ENCODE measurements at regions of chr14 and their contacts with region 1.

Region 1: GRCh38 chr14:76050797-76051392 is 65.3 kb downstream of the IFT43 start:
- DNase-seq: peak; percentile 55 to 60
- ATAC-seq: peak; percentile 75 to 87
- H3K4me3 ChIP-seq: no peak overlapping the region
- H3K27ac ChIP-seq: no peak overlapping the region
- H3K4me1 ChIP-seq: no peaks in the 10 kb centered on the region
- CTCF ChIP-seq: peak; percentile 89
- EP300 ChIP-seq: no peak
- POLR2A ChIP-seq: no peak
- RAD21 ChIP-seq: peak; percentile 85 to 93

Region 2: DNA sequence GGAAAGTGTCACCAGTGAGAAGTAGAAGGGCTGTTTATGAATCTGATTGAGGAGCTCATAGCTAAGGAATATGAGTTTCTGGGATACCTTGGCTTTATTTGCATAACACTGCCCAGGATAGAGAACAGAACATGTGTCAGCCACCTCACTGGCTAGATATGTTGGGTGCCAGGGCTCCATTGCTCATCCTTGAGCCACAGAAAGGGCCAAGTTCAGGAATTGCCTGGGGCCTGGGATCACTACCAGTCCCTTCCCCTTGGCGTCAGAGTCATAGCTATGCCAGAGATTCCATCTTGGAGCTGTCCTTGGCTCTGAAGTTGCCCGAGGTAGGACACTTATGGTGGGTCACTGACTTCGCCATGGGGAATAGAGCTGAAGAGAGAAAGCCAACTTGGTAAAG is 16.3 kb before region 1 on chr14:
- CTCF ChIA-PET with region 1: interaction called, 38 read pairs
- POLR2A ChIA-PET with region 1: no interaction called
- DNase-seq: no peak
- ATAC-seq: no peak
- H3K4me3 ChIP-seq: no peak overlapping the region
- H3K27ac ChIP-seq: no peak overlapping the region
- H3K4me1 ChIP-seq: no peaks in the 10 kb centered on the region
- CTCF ChIP-seq: no peak
- EP300 ChIP-seq: no peak
- POLR2A ChIP-seq: no peak
- RAD21 ChIP-seq: no peak

Region 3: GRCh38 chr14:76067536-76067935 is 16.6 kb after region 1 on chr14:
- CTCF ChIA-PET with region 1: interaction called, 23 read pairs
- POLR2A ChIA-PET with region 1: no interaction called
- DNase-seq: no peak
- ATAC-seq: no peak
- H3K4me3 ChIP-seq: no peak overlapping the region
- H3K27ac ChIP-seq: no peak overlapping the region
- H3K4me1 ChIP-seq: no peaks in the 10 kb centered on the region
- CTCF ChIP-seq: no peak
- EP300 ChIP-seq: no peak
- POLR2A ChIP-seq: no peak
- RAD21 ChIP-seq: no peak

Region 4: DNA sequence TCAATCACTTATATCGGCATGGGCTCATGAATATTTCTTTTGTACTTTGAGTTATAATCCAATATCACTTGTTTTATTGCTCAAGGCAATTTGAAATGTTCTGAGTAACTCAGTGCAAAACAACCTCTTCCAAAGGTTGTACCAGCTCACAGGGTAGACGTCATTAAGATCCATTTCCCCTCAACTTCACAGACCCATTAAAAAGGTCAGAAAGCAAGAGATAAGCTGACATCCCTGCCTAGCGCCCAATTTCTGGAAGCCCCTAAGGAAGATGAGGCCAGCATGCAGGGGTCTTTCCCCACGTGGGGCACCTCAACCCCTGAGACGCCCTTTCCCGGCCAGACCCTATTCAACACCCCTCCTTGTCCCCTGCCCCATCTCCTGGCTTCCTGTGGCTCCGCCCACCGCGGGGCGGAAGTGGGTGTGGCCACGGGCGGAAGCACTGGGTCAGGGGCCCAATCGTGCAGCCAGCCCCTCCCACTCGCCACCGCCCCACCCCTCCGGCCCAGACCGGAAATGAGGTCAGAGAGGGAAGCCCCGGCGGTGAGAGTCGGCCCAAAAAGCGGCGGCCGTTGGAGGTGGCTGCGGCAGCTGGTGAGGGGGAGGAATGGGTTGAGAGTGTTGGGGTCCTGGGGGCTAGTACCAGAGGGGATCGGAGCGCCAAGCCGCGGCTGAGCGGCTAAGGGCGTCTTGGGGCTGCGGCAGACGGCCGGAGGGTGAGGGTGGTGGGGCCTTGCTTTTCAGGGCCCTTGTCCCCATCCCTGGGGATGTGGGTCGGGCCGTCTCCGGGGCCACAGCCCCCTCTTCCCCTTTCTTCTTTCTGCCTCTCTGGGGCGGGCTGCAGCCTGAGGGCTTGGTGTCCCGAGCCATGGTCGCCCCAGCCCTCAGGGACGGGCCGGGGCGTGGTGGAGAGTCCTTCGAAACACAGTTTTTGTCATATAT is 100.8 kb after region 1 on chr14 and contains the start of gene GPATCH2L:
- CTCF ChIA-PET with region 1: no interaction called
- POLR2A ChIA-PET with region 1: no interaction called
- DNase-seq: peak; percentile 88 to 91
- ATAC-seq: peak; percentile 97
- H3K4me3 ChIP-seq: peak within 1 kb of the TSS; percentile 82
- H3K27ac ChIP-seq: peak within 1 kb of the TSS; percentile 80 to 93
- H3K4me1 ChIP-seq: peaks cover 25% of the 10 kb centered on the region
- CTCF ChIP-seq: no peak
- EP300 ChIP-seq: no peak
- POLR2A ChIP-seq: peak; percentile 66
- RAD21 ChIP-seq: no peak
- polyA plus RNA-seq, gene GPATCH2L: 30.9 and 31.4 TPM in 2 replicates

Region 5: GRCh38 chr14:76371066-76371465 is 320.2 kb after region 1 on chr14:
- CTCF ChIA-PET with region 1: interaction called, 17 read pairs
- POLR2A ChIA-PET with region 1: no interaction called
- DNase-seq: no peak
- ATAC-seq: no peak
- H3K4me3 ChIP-seq: no peak overlapping the region
- H3K27ac ChIP-seq: no peak overlapping the region
- H3K4me1 ChIP-seq: no peaks in the 10 kb centered on the region
- CTCF ChIP-seq: no peak
- EP300 ChIP-seq: no peak
- POLR2A ChIP-seq: no peak
- RAD21 ChIP-seq: no peak

Region 6: GRCh38 chr14:76640923-76641395 is 590.1 kb after region 1 on chr14:
- CTCF ChIA-PET with region 1: interaction called, 66 read pairs
- POLR2A ChIA-PET with region 1: no interaction called
- DNase-seq: no peak
- ATAC-seq: no peak
- H3K4me3 ChIP-seq: no peak overlapping the region
- H3K27ac ChIP-seq: no peak overlapping the region
- H3K4me1 ChIP-seq: no peaks in the 10 kb centered on the region
- CTCF ChIP-seq: no peak
- EP300 ChIP-seq: no peak
- POLR2A ChIP-seq: no peak
- RAD21 ChIP-seq: no peak

Region 7: DNA sequence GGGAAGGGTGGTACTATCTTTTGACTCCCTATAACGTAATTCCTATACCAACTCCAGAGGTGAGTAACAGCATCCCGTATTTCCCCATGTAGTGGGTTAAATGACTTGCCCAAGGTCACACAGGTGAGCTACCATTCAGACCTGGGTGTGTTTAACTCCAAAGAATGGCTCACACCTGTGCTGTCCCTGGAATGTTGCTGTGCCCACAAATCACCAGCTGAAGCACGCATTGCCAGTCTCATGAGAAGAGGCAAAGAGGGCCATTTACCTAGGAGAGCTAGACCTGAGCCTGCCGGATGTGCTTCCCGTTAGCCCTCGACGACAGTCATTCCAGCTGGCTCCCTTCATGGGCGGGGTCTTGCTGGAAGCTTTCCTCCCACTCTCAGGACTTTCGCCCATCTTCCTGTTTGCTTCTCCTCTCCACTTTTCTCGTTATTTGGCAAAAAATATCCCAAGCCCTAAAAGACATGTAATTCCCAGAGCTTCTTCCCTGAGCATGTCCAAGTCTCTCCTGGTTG is 603.7 kb after region 1 on chr14:
- CTCF ChIA-PET with region 1: interaction called, 10 read pairs
- POLR2A ChIA-PET with region 1: no interaction called
- DNase-seq: no peak
- ATAC-seq: peak in 1 of 2 experiments; percentile 24; a peak in 1 of 6 replicates
- H3K4me3 ChIP-seq: no peak overlapping the region
- H3K27ac ChIP-seq: no peak overlapping the region
- H3K4me1 ChIP-seq: no peaks in the 10 kb centered on the region
- CTCF ChIP-seq: no peak
- EP300 ChIP-seq: no peak
- POLR2A ChIP-seq: no peak
- RAD21 ChIP-seq: no peak